PC-9 (cell line): ENCODE measurements at regions of chr10 and their contacts with region 1.

Region 1: DNA sequence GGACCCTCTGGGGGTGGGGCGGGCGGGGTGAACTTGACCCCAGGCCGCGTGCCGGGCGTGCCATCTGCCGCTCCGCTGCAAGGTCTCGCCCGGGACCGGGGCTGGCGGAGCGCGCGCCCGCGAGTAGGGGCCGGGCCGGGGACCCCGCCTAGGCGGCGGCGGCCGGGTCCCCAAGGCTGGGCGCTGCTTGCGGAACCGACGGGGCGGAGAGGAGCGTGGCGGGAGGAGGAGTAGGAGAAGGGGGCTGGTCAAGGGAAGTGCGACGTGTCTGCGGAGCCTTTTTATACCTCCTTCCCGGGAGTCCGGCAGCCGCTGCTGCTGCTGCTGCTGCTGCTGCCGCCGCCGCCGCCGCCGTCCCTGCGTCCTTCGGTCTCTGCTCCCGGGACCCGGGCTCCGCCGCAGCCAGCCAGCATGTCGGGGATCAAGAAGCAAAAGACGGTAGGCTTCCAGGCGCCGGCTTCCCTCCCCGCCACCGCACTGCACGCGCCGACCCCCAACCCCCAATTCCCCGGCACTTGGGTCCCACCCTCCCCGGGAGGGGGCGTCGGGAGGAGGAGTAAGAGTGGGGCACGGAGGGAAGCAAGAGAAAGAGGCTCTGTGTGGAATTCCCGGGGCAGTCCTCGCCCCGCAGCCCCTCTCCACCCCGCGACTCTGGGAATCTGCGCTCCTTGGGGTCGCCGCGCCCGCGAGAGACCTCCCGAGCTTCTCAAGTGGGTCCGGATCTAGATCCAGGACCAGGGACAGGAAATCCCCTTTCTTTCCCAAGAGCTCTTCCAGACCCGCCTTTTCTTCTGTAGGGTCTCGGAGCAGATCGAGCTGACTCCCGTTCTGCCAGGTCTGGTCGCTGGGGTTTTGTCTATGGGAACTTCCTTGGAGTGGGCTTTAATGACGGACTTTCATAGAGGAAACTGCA is at the start of gene PAPSS2:
- DNase-seq: peak in 1 of 2 experiments; percentile 36
- H3K4me3 ChIP-seq: peak within 1 kb of the TSS; percentile 75
- H3K27ac ChIP-seq: no peak within 1 kb of the TSS
- H3K4me1 ChIP-seq: peaks cover 9% of the 10 kb centered on the region; the same call in 1 of the 2 replicates
- H3K27me3 ChIP-seq: no peaks in the 10 kb centered on the region
- CTCF ChIP-seq: no peak
- total RNA-seq, gene PAPSS2: 37.4 and 71.8 TPM in 2 replicates

Region 2: DNA sequence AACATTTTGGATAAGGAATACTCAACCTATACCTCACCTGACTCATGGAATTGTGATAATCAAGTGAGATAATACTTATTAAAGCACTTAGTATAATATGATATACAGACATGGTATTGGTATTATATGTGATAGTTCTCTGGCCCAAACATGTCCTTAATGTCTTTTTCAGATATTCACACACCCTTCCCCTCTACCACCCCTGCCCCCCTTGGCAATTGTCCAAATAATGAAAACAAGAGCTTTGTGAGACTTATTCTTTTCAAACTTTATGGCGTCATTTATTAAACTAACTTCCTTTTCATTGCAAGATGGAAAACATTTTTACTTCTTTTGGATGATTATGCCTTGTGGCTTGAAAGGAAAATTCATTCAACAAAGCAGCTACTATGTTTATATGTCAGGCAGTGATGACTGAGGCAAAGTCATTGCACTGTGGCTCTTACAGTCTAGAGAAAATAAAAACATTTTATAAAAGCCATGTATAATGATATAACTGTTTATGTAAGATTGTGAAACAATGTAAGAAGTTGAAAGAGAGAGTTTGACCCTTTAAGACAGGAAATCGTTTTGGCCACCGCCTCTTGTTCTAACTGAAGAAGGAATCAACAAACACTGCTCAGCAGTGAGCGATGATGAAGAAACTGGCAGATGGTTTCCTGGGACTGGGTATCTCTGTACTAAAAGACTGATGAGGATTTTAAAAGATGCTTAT is 127.8 kb before region 1 on chr10:
- CTCF ChIA-PET with region 1: no interaction called
- POLR2A ChIA-PET with region 1: no interaction called
- intact Hi-C with region 1: loop called (anchors 5 kb)
- DNase-seq: no peak
- H3K4me3 ChIP-seq: no peak overlapping the region
- H3K27ac ChIP-seq: no peak overlapping the region
- H3K4me1 ChIP-seq: no peaks in the 10 kb centered on the region
- H3K27me3 ChIP-seq: no peaks in the 10 kb centered on the region
- CTCF ChIP-seq: no peak

Region 3: DNA sequence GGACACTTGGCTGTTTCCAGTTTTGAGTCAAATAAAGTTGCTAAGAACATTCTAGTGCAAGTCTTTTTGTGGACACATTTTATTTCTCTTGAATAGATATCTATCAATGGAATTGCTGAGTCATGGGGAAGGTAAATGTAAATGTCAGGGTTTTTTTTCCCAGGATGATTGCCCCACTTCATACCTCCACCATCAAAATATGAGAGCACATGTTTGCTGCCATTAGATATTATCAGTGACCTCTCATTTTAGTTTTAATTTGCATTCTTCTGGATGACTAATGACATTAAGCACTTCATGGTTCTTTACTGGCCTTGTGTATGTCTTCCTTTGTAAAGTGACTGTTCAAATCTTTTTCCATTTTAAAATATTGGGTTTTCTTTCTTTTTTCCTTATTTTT is 45.5 kb after region 1 on chr10:
- CTCF ChIA-PET with region 1: no interaction called
- POLR2A ChIA-PET with region 1: no interaction called
- intact Hi-C with region 1: loop called (anchors 5 kb)
- DNase-seq: peak in 1 of 2 experiments; percentile 82
- H3K4me3 ChIP-seq: no peak overlapping the region
- H3K27ac ChIP-seq: peak overlapping the region; percentile 30; the same call in 1 of the 2 replicates
- H3K4me1 ChIP-seq: peaks cover 24% of the 10 kb centered on the region
- H3K27me3 ChIP-seq: no peaks in the 10 kb centered on the region
- CTCF ChIP-seq: no peak

Region 4: DNA sequence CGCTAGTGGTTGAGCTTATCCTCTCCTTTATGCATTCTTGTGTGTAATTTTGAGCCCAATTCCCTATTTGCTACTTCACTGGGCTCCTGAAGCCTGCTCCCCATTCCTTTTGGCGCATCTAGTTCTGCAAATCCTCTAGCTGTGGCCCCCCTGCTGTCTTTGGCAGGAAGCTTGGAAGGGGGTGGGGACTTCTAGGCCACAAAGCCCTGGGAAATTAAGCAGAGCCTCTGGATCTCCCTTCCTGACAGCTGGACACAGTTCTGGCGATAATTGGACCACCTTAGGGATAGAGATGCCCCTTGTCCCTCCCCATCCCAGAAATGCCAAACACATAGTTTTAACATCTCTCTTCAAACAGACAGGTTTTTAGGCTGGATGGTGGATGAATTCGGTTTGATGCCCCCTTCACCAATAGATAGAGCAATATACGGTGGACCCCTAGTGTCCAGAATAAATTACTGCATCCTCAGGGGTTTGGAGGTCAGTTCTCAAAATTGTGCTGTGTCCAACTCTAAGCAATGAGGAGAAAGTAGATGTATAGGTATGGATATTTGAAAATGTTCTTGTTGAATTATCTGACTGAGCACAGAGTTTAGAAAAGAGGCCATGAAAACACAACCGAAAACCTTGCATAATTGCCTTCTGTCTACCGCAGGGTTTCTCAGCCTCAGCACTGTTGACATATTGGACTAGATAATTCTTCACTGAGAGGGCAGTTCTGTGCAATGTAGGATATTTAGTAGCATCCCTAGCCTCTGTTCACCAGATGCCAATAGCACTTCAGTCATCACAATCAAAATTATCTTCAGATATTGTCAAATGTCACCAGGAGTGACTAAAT is 75.4 kb after region 1 on chr10:
- CTCF ChIA-PET with region 1: interaction called, 3 read pairs
- POLR2A ChIA-PET with region 1: no interaction called
- intact Hi-C with region 1: loop called (anchors 2 kb)
- DNase-seq: peak in 1 of 2 experiments; percentile 6
- H3K4me3 ChIP-seq: no peak overlapping the region
- H3K27ac ChIP-seq: no peak overlapping the region
- H3K4me1 ChIP-seq: no peaks in the 10 kb centered on the region
- H3K27me3 ChIP-seq: no peaks in the 10 kb centered on the region
- CTCF ChIP-seq: peak; percentile 82